ENCODE measurements at regions of chr6 and their contacts with region 1.

Region 1: GRCh38 chr6:158718461-158719046 is 68.7 kb downstream of the SYTL3 start:
- DNase-seq: no peak
- CTCF ChIP-seq: peak; percentile 30

Region 2: DNA sequence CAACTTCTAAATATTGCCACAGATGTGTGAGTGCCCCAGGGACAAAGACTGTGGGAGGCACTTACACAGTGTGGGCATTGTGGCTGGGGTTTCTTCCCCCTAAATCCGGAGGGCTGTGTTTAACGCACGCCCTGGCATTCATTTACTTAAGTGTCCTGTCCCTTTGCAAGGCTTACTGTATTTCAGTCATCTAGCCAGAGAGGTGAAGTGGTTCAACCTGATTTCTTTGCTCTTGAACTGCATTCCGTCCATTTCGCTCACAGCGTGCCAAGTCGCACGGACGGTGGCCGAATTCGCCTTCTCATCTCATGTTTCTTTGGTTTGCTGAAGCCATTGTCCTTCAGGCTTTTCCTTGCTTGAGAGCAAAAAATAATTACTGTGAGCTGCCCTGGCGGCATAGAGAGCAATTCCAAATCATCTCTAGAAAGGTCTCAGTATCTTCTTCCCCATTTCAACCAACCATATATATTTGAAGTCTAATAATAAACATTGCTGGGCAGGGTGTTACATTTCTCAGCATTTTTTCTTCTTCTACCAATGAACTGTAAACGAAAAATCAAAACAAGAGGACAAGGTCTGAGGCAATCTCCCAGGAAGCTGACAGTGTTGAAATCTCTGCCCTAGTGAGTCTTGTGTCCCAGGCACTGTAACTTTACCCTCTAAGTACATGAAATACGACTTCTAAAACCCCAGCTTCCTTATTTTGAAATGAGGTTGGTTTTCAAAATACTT is 51.8 kb before region 1 on chr6:
- CTCF ChIA-PET with region 1: no interaction called
- POLR2A ChIA-PET with region 1: no interaction called
- DNase-seq: peak; percentile 43
- CTCF ChIP-seq: no peak

Region 3: GRCh38 chr6:158677906-158678578 is 40.5 kb before region 1 on chr6:
- CTCF ChIA-PET with region 1: no interaction called
- POLR2A ChIA-PET with region 1: no interaction called
- DNase-seq: no peak
- CTCF ChIP-seq: no peak

Region 4: DNA sequence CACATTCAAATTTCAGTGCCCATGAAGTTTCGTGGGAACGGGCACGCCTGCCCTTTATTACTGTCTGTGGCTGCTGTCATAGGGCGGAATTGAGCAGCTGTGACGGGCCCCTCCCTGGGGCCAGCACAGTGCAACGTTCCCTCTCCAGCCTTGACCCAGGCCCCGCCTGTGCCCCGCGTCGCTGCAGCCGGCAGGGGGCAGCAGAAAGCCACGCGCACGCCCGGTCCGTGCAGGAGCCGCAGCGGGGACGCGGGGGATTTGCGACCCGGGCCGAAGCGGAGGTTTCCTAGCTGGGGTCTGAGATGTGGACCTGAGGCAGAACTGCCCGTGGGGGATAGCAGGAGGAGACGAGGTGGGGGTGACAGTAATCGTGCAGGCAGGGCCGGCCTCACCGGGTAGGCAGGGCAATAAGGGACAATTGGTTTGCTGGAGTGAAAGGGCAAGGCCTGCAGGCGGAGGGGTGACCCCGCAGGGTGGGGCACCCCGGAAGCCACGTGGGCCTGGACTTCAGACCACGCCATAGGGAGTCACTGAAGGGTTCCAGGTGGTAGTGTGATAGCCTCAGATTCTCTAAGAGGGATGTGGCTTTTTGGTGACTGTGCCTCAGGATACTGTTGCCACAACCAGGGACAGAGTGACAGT is 14.3 kb before region 1 on chr6:
- CTCF ChIA-PET with region 1: interaction called, 12 read pairs
- POLR2A ChIA-PET with region 1: no interaction called
- DNase-seq: peak; percentile 91
- CTCF ChIP-seq: peak; percentile 99

Measured in GM10248 (cell line).